Posterior cingulate gyrus (tissue), 11 donors: ENCODE measurements at regions of chr2 and their contacts with region 1.

Region 1: DNA sequence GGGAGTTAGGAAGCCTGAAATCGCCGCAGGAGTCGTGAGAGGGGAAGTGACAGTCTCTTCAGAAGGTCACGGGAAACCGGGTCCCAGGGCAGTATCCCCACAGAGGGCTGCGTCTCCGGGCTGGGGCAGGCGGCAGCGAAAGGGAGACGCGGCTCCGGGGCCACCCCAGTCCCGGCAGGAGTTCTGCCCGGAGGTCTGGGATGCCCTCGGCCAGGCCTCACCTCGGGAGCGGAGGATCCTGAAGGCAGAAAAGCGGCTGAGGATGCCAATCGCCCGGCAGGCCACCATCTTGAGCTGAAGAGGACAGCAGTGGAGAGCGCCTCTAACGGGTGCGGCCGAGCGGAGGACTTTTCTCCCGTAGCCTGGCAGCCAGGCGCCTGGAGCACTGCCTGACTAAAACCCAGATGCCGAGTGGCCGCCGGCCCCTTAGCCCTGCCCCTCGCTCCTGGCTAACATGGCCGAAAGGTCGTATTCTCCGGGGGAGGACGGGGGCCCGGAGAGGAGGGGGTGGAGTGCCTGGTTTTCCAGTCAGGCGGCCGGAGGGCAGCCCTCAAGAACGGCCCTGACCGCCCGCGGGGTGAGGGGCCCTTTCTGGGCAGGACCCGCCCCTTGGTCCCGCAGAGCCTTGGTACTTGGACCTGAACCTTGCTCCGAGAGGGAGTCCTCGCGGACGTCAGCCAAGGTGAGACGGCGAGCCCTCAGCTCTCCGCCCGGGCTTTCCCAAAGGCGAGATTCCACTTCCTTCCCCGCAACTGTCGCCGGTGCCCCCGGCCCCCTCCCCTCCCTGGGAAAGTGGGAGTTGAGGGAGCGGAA is at the starts of genes HADHA and HADHB:
- DNase-seq: peak; percentile 78 to 98 (median 88)

Region 2: DNA sequence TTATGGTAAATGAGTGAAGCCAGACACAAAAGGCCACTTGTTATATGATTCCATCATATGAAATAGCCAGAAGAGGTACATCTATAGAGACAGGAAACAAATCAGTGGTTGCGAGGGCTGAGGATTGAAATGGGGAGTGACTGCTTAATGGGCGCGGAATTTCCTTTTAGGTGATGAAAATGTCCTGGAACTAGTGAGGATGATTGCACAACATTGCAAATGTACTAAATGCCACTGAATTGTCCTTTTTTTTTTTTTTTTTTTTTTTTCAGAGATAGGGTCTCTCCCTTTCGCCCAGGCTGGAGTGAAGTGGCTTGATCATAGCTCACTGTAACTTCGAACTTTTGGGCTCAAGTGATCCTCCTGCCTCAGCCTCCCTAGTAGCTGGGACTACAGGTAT is 86.9 kb before region 1 on chr2:
- intact Hi-C with region 1: no loop called
- DNase-seq: no peak

Region 3: DNA sequence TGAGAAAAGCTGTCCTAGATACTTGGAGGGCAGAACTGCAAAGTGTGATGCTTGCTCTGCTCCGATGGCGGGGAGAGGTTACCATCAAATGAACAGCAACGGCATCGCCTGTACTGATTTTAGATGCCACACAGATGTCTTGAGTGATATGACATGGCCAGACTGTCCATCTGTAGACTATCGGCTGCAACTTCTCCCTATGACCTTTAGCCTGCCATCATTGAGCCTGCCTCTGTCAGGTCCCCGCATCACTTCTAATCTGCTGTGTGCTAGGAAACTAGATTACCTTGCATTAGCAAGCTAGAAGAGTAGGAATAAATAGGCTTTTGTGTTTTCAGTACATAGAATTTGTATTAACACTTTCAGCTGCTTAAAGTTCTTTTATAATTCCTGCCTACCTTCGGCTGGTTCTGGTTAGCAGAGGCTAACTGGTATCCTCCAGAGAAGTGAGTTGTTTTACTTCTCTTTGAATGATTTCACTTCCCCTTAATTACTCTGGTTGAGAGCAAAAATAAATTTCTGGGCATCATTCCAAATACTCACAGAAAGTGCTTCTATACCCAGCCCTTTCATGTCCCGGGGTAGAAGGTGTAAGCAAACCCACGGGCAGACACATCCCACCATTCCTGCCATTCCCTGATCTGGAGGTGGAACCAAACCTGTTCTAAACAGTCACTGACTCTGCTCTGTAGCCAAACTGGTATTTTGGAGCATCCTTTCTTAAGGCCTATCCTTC is 47.7 kb before region 1 on chr2:
- intact Hi-C with region 1: loop called (anchors 10 kb)
- DNase-seq: no peak

Region 4: GRCh38 chr2:26330113-26330549 is 85.6 kb after region 1 on chr2:
- intact Hi-C with region 1: loop called (anchors 5 kb)
- DNase-seq: peak; percentile 74 to 98 (median 90)

Region 5: GRCh38 chr2:26345545-26346453 is 101.3 kb after region 1 on chr2 and contains the start of gene SELENOI:
- intact Hi-C with region 1: loop called (anchors 2 kb)
- DNase-seq: peak; percentile 98 to 100 (median 99)